Psoas muscle (tissue), 8 donors: ENCODE measurements at regions of chr14 and their contacts with region 1.

Region 1: DNA sequence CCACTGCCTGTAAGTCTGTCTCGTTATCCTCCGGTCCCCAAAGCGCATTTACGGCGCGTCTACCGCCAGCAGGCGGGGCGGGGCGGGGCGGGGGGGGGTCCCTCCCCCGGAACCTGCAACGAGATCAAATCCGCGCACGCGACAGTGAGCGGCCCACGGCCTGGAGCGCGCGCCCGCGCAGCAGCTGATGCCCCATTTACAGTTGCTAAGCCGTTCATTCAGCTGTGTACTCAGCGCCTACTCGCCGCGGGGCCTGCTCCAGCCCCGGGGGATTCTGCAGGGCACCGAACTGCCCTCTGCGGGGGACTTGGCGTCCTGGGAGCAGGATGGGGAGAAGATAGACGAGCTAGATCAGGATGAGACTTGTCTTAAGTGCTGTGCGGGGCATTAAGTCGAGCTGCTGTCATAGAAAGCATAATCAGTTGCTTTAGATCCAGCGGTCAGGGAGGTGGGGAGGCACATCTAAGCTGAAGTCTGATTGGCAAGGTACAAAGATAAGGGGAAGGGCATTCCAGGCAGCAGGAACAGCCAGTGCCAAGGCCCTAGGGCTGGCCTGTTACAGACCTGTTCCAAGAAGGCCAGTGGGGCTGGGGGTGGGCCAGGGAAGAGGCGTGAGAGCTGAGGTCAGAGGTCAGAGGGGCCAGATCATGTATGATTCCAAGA is 1.4 kb upstream of the CCDC85C start:
- DNase-seq: peak; percentile 60 to 79
- ATAC-seq: peak; percentile 12 to 55 (median 36)
- H3K4me3 ChIP-seq: peak overlapping the region; percentile 96
- H3K27ac ChIP-seq: peak overlapping the region; percentile 87
- H3K4me1 ChIP-seq: peaks cover 12% of the 10 kb centered on the region
- H3K27me3 ChIP-seq: no peaks in the 10 kb centered on the region
- CTCF ChIP-seq: no peak

Region 2: GRCh38 chr14:99563233-99564129 is 41.9 kb before region 1 on chr14:
- intact Hi-C with region 1: loop called in 1 of 2 experiments (anchors 2 kb)
- DNase-seq: peak; percentile 69 to 81
- ATAC-seq: peak; percentile 88 to 93 (median 90)
- H3K4me3 ChIP-seq: no peak overlapping the region
- H3K27ac ChIP-seq: no peak overlapping the region
- H3K4me1 ChIP-seq: peaks cover 25% of the 10 kb centered on the region
- H3K27me3 ChIP-seq: no peaks in the 10 kb centered on the region
- CTCF ChIP-seq: peak; percentile 47

Region 3: GRCh38 chr14:99574099-99574880 is 31.1 kb before region 1 on chr14:
- intact Hi-C with region 1: loop called in 1 of 2 experiments (anchors 5 kb)
- DNase-seq: no peak
- ATAC-seq: no peak
- H3K4me3 ChIP-seq: no peak overlapping the region
- H3K27ac ChIP-seq: no peak overlapping the region
- H3K4me1 ChIP-seq: peaks cover 65% of the 10 kb centered on the region
- H3K27me3 ChIP-seq: no peaks in the 10 kb centered on the region
- CTCF ChIP-seq: no peak